ENCODE measurements at regions of chr5 and their contacts with region 1.

Region 1: DNA sequence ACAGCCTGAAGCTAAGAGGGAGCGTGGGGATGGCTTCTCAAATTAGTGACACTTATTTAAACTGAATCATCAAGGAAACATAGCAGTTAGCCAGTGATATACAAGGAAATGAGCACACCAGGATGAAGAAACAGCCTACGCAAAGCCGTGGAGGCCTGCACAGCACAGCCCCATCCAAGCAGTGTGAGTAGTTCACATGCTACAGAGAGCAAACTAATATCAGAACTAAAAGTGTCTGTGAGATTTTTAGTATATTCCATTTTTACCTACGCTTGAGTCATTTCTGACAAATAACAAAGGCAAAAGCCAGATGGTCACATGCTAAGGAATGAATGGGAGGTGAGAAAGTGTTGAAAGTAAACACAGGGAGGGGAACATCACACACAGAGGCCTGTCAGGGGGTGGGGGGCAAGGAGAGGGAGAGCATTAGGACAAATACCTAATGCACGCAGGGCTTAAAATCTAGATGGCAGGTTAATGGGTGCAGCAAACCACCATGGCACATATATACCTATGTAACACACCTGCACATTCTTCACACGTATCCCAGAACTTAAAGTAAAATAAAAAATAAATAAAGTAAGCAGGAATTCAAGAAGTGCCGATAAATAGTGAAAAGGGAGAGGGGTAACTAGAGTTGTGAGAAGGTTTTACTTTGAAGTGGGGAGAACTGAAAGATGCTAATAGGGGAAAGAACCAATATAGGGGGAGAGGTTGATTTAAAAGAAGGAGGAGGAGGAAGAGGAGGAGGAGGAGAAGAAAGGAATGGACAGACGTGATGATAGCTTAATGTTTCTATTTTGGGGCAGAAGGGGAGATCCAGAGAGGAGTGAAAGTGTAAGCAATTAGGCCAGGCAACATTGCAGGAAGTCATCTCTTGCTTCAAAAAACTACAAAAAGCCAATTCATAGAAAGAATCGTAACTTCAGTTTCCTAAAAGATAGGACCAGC is 100.9 kb upstream of the PTGER4 start:
- DNase-seq: peak; percentile 87
- H3K4me3 Mint-ChIP-seq: peak overlapping the region; percentile 66
- H3K27ac Mint-ChIP-seq: peak overlapping the region; percentile 92
- H3K4me1 Mint-ChIP-seq: peaks cover 37% of the 10 kb centered on the region
- H3K27me3 Mint-ChIP-seq: no peaks in the 10 kb centered on the region

Region 2: DNA sequence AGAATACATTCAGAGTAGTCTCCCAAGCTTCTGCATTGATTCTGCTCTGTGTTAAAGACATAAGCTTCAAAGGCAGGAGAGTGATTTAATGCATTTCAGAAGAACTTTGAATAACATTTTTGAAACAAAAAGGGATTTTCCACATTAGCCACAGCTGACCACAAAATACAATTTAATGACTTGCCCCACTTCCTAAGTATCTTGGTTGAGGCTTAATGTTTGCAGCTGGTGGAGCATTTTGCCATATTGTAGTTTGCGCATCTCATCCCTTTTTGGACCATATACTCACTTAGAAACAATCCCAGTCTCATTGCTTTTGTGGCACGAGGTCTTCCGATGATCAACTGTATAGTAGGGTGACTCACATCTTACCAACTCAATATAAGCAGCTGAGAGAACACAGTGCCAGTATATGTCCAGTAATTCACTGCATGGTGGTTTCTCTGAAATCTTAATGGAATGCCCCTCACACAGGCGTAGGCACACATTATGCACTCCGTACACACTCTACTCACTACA is 354.8 kb before region 1 on chr5:
- CTCF ChIA-PET with region 1: no interaction called
- intact Hi-C with region 1: loop called (anchors 1 kb)
- DNase-seq: peak; percentile 66
- H3K4me3 Mint-ChIP-seq: peak overlapping the region; percentile 31
- H3K27ac Mint-ChIP-seq: peak overlapping the region; percentile 92
- H3K4me1 Mint-ChIP-seq: peaks cover 50% of the 10 kb centered on the region
- H3K27me3 Mint-ChIP-seq: no peaks in the 10 kb centered on the region

Region 3: DNA sequence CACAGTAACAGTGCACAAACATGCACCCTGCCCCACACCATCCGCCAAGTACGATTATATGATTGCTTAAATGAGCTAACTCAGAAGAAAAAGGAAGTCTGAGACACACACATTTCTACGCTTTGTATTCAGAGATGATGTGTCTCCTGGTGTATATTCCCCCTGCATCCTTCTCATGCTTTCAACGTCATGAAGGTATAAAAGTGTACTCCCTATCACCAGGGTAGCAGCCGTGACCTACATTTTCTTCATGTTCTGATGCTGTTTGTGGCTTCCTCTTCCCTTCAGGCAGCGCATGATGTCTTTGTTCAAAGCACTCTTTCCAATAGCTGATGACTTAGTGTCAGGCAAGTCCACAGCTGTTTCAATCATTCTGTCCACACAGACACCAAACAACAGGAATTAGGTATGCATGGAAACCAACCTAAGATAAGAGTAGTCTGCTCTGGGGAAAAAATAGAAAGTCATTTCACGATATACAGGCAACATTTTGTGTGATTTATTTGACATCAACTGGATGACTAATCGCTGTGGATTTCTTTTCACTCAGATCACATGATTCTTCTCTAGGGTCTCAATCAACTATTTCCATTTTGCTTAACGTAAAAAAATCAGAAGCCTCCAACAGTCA is 168.4 kb before region 1 on chr5:
- CTCF ChIA-PET with region 1: no interaction called
- intact Hi-C with region 1: loop called (anchors 1 kb)
- DNase-seq: peak; percentile 88
- H3K4me3 Mint-ChIP-seq: peak overlapping the region; percentile 58
- H3K27ac Mint-ChIP-seq: peak overlapping the region; percentile 98
- H3K4me1 Mint-ChIP-seq: peaks cover 64% of the 10 kb centered on the region
- H3K27me3 Mint-ChIP-seq: no peaks in the 10 kb centered on the region

Region 4: DNA sequence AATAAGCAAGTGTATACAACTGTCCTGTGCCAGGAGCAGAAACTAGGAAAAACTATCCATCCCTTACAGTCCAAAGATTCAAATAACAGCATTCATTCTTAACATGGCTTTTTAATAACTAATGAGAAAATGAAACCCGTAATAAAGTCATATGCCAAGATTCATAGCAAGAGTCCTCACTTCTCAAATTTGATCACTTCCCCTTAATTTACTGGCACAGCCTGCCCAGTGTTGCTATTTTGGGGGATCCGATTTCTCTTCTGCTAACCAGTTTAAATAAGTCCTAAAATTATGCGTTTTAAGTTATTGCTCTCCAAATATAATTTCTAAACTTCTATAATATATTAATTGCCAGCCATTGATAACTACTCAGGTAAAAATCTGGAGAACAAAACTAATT is 76.0 kb before region 1 on chr5:
- CTCF ChIA-PET with region 1: no interaction called
- intact Hi-C with region 1: loop called (anchors 1 kb)
- DNase-seq: no peak
- H3K4me3 Mint-ChIP-seq: no peak overlapping the region
- H3K27ac Mint-ChIP-seq: no peak overlapping the region
- H3K4me1 Mint-ChIP-seq: peaks cover 24% of the 10 kb centered on the region
- H3K27me3 Mint-ChIP-seq: no peaks in the 10 kb centered on the region

Region 5: GRCh38 chr5:40605295-40605958 is 26.7 kb after region 1 on chr5:
- CTCF ChIA-PET with region 1: no interaction called
- intact Hi-C with region 1: no loop called
- DNase-seq: no peak
- H3K4me3 Mint-ChIP-seq: no peak overlapping the region
- H3K27ac Mint-ChIP-seq: no peak overlapping the region
- H3K4me1 Mint-ChIP-seq: peaks cover 36% of the 10 kb centered on the region
- H3K27me3 Mint-ChIP-seq: no peaks in the 10 kb centered on the region

Region 6: DNA sequence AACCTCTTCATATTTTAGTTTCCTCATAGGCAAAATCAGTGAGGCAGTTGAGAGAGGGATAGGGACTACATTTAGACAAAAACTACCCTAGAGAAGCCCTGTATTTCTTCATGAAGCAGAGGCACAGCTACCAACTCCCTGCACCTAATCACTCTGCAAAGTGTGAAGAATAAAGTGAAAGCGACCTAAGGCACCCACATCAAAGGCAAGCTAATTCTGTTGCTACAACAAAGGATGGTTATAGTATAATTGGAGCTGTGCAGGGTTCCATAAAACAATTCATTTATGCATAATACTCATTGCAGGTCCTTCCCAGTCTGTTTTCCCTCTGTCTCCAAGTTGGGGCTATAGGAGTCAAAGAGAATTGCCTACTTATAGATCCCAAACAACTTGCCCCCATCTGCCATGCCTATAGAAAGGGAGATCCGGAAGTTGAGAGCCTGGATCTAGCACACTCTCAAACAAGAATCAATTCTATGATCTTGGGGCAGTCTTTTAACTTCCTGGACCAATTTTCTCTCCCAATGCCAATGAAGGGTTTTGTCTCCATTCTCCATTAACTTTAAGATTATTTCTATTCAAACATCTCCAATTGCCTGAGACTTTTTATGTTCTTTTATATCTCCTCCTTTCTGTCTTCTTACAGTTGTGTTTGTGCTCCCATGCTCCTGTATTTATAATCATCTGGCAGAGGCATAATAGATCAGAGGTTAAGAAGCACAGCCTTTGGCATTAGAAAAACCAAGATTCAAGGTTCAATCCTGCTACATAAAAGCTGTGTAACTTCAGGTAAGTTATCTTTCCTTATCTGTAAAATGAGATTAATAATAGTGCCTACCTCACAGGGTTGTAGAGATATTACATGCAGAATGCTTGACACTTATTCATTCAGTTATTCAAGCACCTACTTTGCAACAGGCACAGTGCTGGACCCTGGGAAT is 45.0 kb after region 1 on chr5:
- CTCF ChIA-PET with region 1: no interaction called
- intact Hi-C with region 1: loop called (anchors 1 kb)
- DNase-seq: peak; percentile 60
- H3K4me3 Mint-ChIP-seq: no peak overlapping the region
- H3K27ac Mint-ChIP-seq: no peak overlapping the region
- H3K4me1 Mint-ChIP-seq: peaks cover 45% of the 10 kb centered on the region
- H3K27me3 Mint-ChIP-seq: no peaks in the 10 kb centered on the region

Region 7: DNA sequence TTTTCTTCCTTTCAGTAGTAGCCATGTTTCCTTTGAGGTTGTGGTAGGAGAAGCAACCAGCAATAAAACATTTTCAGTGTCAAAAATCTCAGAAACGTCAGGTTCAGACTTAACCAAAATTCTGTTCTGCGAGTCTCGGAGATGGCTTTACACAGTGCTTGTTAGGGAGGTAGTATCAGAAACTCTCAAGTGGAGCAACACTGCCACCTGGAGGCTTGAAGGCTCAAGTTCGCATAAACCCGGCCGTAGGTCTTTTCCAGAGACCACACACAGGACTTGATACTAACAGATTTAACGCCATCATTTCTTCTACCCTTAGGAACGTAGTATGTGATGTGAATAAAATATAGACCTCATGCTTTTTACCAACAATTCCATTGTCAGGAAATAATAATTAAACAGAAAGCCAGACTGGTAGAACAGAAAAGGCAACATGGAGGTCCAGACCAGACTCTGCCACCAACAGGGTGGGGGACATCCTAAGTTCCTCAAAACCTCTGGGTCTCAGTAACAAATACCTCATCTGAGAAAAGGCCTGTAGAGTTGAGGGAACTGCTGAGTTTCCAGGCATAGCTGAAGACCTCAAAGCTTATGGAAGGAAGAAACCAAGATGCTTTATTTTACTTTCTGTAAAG is 109.5 kb after region 1 on chr5:
- CTCF ChIA-PET with region 1: interaction called, 4 read pairs
- intact Hi-C with region 1: loop called (anchors 1 kb)
- DNase-seq: peak; percentile 95
- H3K4me3 Mint-ChIP-seq: peak overlapping the region; percentile 89
- H3K27ac Mint-ChIP-seq: peak overlapping the region; percentile 99
- H3K4me1 Mint-ChIP-seq: peaks cover 64% of the 10 kb centered on the region
- H3K27me3 Mint-ChIP-seq: no peaks in the 10 kb centered on the region

Region 8: GRCh38 chr5:40834849-40835787 is 256.3 kb after region 1 on chr5 and contains the start of gene RPL37:
- CTCF ChIA-PET with region 1: no interaction called
- intact Hi-C with region 1: loop called (anchors 5 kb)
- DNase-seq: peak; percentile 96
- H3K4me3 Mint-ChIP-seq: peak within 1 kb of the TSS; percentile 100
- H3K27ac Mint-ChIP-seq: peak within 1 kb of the TSS; percentile 100
- H3K4me1 Mint-ChIP-seq: peaks cover 48% of the 10 kb centered on the region
- H3K27me3 Mint-ChIP-seq: no peaks in the 10 kb centered on the region
- total RNA-seq, gene RPL37: 2,148 to 2,239 TPM